Caco-2 (cell line): ENCODE measurements at regions of chr22 and their contacts with region 1.

Region 1: DNA sequence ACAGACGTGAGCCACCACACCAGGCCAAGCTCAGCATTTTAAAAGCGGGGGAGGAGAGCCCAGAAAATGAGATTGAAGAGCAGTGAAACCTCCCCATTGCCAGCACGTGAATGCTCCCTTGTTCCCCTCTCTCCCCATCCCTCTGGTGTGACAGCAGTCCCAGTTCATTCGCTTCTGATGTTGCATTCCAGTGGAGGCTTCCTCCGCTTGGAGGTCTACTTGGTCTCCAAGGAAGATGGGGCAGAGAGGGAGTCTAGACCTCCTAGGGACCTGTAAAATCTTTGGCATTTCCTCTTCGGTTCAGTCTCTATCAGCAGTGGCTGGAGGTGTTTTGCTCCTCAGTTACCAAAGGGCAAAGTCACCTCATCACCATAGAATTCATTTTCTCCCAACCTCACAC is 30.2 kb upstream of the EP300 start:
- DNase-seq: no peak
- H3K4me3 ChIP-seq: no peak overlapping the region
- H3K4me3 Mint-ChIP-seq: no peak overlapping the region
- H3K27ac Mint-ChIP-seq: no peak overlapping the region
- H3K4me1 ChIP-seq: no peaks in the 10 kb centered on the region
- H3K4me1 Mint-ChIP-seq: no peaks in the 10 kb centered on the region
- H3K27me3 ChIP-seq: no peaks in the 10 kb centered on the region
- H3K27me3 Mint-ChIP-seq: no peaks in the 10 kb centered on the region
- CTCF ChIP-seq: no peak

Region 2: GRCh38 chr22:41009202-41009943 is 52.8 kb before region 1 on chr22:
- CTCF ChIA-PET with region 1: no interaction called
- POLR2A ChIA-PET with region 1: no interaction called
- intact Hi-C with region 1: no loop called
- DNase-seq: no peak
- H3K4me3 ChIP-seq: no peak overlapping the region
- H3K4me3 Mint-ChIP-seq: no peak overlapping the region
- H3K27ac Mint-ChIP-seq: no peak overlapping the region
- H3K4me1 ChIP-seq: no peaks in the 10 kb centered on the region
- H3K4me1 Mint-ChIP-seq: no peaks in the 10 kb centered on the region
- H3K27me3 ChIP-seq: no peaks in the 10 kb centered on the region
- H3K27me3 Mint-ChIP-seq: no peaks in the 10 kb centered on the region
- CTCF ChIP-seq: no peak

Region 3: DNA sequence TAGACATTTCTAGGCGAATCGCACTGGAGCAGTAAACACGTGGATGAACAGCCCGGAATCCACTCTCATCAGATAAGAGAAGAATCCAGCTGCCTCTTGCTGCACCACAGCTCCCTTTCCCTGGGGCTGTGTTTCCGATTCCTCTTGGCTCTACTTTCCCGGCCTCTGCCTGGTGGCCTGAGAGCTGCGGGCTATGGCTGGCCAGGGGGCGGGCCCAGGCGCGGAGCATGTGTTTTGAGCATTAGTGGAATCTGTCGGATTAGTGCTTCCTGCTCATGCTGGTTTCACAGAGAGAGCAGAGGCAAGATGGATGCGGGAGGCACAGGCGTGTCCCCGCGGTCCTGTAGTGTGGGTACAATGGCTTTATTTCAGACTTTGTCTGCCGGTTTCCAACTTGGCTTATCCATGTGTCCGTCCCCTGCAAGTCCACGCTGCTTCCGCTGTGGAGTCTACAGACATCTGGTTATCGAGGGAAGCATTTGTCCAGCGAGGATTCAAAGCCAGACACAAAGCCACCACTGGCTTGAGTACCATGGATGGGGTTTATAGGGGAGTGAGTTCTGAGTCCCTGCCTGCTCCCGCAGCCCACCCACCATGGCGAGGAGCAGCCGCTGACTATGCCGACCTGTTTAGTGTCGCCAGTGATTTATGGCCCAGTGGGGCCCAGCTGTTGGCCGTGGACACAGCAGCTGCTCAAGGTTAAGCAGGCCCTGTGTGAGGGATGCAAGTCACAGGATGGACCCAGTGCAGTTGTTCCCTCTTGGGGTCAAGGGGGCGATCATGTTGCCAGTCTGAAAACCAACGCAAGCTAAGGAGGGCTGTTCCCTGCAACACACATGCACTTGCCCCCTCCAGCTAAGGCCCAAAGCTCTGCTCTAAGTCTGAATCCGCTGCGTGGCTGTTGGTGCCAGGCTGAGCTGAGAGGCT is 13.1 kb before region 1 on chr22:
- CTCF ChIA-PET with region 1: no interaction called
- POLR2A ChIA-PET with region 1: no interaction called
- intact Hi-C with region 1: no loop called
- DNase-seq: peak; percentile 88 to 90
- H3K4me3 ChIP-seq: peak overlapping the region; percentile 9
- H3K4me3 Mint-ChIP-seq: peak overlapping the region; percentile 73
- H3K27ac Mint-ChIP-seq: peak overlapping the region; percentile 58
- H3K4me1 ChIP-seq: peaks cover 31% of the 10 kb centered on the region
- H3K4me1 Mint-ChIP-seq: peaks cover 14% of the 10 kb centered on the region
- H3K27me3 ChIP-seq: no peaks in the 10 kb centered on the region
- H3K27me3 Mint-ChIP-seq: no peaks in the 10 kb centered on the region
- CTCF ChIP-seq: no peak

Region 4: DNA sequence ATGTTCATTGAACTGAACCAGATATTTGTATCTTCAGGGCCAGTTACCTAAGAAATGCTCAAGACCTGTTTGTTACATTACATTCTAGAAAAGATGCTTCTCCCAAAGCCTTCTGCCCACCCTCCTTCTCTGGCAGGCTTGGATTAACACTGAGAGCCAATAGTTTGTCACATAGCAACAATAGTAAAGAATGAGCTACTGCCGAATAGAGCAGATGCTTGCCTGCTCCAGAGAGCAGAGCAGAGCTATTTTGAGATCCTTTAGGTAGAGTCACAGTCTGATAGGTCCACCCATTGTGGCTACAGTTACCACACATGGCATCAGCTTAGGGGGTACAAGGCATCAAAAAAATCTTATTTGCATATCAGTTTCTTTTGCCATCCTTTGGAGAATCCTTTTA is 16.8 kb after region 1 on chr22:
- CTCF ChIA-PET with region 1: no interaction called
- POLR2A ChIA-PET with region 1: interaction called, 10 read pairs
- intact Hi-C with region 1: no loop called
- DNase-seq: no peak
- H3K4me3 ChIP-seq: no peak overlapping the region
- H3K4me3 Mint-ChIP-seq: no peak overlapping the region
- H3K27ac Mint-ChIP-seq: no peak overlapping the region
- H3K4me1 ChIP-seq: no peaks in the 10 kb centered on the region
- H3K4me1 Mint-ChIP-seq: no peaks in the 10 kb centered on the region
- H3K27me3 ChIP-seq: no peaks in the 10 kb centered on the region; the same call in 1 of the 2 replicates
- H3K27me3 Mint-ChIP-seq: no peaks in the 10 kb centered on the region
- CTCF ChIP-seq: no peak